ENCODE measurements at regions of chr15 and their contacts with region 1.

Region 1: DNA sequence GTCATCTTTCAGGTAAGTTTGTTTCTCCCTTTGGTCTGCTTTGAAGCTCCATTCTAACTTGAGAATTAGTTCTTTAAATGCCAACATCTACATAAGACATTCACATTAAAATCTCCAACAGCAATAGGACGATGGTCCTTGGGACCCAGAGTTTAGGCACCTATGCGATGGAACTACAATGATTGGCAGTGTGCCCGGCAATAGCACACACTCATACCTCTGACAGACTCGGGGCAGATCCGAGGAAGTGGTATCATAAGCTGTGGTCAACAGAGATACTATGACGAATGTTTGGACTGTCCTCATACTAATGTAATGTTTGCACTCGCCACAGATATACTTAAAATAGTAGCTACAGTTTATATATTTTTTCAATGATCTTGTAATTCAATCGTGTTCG is 34.2 kb upstream of the NR2F2 start:
- DNase-seq: no peak
- ATAC-seq: no peak

Region 2: GRCh38 chr15:96181873-96182301 is 114.4 kb before region 1 on chr15:
- intact Hi-C with region 1: loop called (anchors 10 kb)
- DNase-seq: peak; percentile 77
- ATAC-seq: peak; percentile 91

Region 3: DNA sequence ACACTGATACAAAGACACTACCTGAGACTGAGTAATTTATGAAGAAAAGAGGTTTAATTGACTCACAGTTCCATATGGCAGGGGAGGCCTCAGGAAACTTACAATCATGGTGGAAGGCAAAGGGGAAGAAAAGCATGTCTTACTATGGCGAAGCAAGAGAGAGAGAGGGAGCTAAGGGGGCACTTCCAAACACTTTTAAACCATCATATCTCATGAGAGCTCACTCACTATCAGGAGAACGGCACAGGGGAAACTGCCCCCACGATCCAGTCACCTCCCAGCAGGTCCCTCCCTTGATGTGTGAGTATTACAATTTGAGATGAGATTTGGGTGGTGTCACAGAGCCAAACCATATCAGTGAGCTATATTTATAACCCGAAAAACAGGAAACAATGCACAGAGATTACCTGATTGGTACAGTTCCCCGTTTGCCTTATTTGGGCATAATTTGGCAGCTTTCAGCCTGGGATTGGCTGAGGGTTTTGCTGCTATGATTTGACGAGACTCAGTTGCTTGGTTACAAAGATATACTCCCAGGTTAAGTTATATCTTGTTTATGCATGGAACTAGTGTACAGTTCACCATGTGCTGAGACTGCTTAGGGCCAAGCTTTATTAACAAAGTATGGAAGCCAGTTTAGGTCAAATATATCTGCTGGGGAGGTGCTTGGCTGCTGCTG is 218.5 kb after region 1 on chr15:
- intact Hi-C with region 1: no loop called
- DNase-seq: no peak
- ATAC-seq: no peak